ENCODE measurements at regions of chr20 and their contacts with region 1.

Region 1: GRCh38 chr20:44111712-44112335 is 75.2 kb downstream of the JPH2 start:
- H3K4me3 ChIP-seq: no peak overlapping the region
- H3K27ac ChIP-seq: no peak overlapping the region; the same call in 1 of the 2 replicates
- H3K4me1 ChIP-seq: no peaks in the 10 kb centered on the region; the same call in 1 of the 2 replicates
- CTCF ChIP-seq: no peak

Region 2: DNA sequence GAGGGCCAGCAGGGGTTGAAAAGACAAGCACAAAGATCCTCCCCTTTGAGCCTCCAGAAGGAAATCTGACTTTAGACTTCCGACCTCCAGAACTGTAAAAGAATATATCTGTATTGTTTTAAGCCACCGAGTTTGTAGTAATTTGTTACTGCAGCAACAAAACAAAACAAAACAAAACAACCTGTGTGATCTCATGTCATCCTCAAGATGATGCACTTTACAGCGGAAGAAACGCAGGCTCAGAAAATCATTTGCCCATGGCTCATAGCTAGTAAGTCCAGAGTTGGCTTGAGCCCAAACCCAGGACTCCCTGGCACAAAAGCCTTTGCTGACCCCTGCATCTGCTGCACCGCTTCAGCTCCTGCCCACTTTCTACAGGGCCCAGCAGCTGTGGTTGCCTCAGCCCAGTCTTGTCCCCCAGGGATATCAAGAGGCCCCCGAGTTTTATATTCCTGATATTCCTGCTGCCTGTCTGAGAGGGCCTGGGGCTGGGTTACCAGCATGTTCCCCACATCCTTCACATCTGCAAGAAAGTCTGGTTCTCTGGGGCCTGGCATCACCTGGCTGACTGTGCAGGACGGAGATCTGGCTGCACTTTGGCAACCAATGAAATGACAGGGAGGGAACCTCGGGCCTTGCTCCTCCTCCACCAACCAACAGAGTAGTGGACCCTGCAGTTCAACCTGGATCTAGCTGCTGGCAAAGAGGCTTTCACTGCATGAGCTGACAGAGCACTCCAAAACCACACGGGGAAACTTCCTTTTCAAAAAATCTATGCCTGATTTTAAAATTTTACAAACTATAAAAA is 18.3 kb after region 1 on chr20:
- CTCF ChIA-PET with region 1: interaction called, 17 read pairs
- POLR2A ChIA-PET with region 1: no interaction called
- H3K4me3 ChIP-seq: no peak overlapping the region
- H3K27ac ChIP-seq: no peak overlapping the region
- H3K4me1 ChIP-seq: no peaks in the 10 kb centered on the region
- CTCF ChIP-seq: no peak

Region 3: GRCh38 chr20:44167736-44168135 is 55.9 kb after region 1 on chr20:
- CTCF ChIA-PET with region 1: interaction called, 11 read pairs
- POLR2A ChIA-PET with region 1: no interaction called
- H3K4me3 ChIP-seq: no peak overlapping the region
- H3K27ac ChIP-seq: no peak overlapping the region
- H3K4me1 ChIP-seq: no peaks in the 10 kb centered on the region
- CTCF ChIP-seq: no peak

Region 4: DNA sequence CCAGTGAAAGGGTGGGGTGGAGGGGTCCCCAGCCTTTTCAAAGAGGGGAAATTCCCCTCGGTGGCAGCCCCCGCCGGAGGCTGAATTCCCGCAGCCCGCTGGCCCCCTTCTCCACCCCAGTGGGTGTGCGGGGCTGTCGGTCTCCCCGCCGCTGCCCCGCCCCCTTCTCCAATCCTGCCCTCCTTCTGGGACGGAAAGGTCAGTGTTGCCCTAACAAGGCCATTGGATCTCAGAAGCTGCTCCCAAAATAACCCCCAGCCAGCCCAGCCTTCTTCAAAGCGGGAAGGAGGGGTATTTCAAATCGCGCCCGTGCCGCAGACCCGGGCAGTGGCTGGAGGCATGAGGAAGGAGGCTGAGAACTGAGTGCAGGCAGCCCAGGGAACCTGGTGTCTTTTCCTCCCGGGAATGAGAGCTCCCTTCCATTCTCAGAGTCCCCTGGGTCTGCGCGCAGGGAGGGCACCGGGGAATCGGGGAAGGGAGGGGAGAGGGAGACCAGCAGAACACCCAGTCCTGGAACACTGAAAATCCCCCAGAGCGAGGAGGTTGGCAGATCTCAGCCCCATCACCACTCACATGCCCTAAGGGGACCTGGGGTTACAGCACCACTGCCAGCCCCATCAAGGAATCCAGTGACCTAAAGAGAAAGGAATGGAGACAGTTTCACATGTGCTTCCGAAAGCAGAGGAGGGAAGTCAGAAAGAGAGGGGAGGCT is 75.4 kb after region 1 on chr20 and contains the start of gene JPH2:
- CTCF ChIA-PET with region 1: interaction called, 316 read pairs
- POLR2A ChIA-PET with region 1: interaction called, 21 read pairs
- H3K4me3 ChIP-seq: peak within 1 kb of the TSS; percentile 40
- H3K27ac ChIP-seq: no peak within 1 kb of the TSS
- H3K4me1 ChIP-seq: peaks cover 6% of the 10 kb centered on the region
- CTCF ChIP-seq: no peak

Region 5: DNA sequence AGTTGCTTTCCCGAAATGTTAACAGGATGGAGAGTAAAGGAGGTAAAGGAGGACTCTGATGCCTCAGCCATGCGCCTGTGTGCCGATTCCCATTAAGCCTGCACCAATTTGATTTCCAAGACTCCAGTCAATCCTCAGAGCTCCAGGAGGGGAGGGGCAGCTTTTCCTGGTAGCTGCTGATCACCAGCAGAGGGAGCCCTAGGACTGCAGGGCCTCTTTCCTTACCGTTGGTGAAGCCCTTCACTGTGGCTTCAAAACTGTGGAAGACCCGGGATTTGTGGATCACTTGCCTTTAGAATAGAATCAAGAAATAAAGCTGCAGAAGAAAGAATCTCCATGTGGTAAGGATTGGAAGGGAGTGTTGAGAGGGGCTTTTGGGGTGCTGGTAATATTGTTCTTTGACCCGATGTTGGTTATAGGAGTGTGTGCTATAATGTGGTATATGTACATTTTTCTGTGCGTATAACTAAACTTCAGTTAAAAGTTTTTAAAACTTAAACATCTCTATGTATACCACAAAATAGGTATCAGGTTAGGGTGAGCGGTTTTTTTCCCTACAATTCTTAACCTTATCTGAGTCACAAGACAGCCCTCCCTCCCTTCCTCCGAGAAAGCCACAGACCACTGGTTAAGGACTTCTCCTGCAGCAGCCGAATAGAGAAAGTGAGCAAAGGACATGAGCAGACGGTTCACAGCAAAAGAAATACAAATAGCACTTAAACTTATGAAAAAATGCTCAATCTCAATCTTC is 105.7 kb after region 1 on chr20:
- CTCF ChIA-PET with region 1: interaction called, 36 read pairs
- POLR2A ChIA-PET with region 1: no interaction called
- H3K4me3 ChIP-seq: no peak overlapping the region
- H3K27ac ChIP-seq: no peak overlapping the region
- H3K4me1 ChIP-seq: no peaks in the 10 kb centered on the region
- CTCF ChIP-seq: peak; percentile 85